RWPE1 (cell line): ENCODE measurements at regions of chr20 and their contacts with region 1.

Region 1: GRCh38 chr20:41978875-41979274 is 360.7 kb upstream of the CHD6 start:
- DNase-seq: no peak
- H3K27ac ChIP-seq: no peak overlapping the region
- CTCF ChIP-seq: no peak

Region 2: DNA sequence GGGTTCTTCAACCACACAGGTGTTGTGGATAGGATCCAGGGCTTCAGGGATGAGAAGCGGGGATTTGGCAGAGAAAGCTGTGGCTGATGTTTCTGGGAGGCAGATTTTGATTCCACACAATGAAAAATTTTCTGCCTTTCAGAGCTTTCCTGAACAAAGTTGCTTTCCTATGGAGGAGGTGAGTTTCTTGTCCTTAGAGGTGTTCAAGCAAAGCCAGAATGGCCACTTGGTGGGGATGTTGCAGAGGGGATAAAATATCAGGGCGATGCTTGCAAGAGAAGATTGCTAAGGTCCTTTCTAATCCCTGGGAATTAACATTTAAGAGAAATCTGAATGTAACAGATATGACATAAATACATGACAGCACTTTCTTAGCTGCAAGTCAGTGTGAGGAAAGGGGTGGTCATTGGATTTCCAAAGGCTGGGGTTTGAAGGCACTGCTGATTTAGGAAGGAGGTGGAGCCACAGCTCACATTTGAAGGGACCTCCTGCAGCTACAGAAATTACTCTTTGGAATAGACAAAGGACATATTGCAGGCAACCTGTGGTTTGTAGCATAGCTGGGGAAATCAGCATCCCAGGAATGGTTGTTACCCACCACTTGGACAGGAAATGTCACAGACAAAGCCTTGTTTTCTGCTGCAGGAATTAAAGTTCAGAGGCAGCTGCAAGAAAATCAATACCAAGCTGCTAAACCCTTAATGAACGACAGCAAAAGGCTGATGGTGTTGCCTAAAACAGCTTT is 89.6 kb before region 1 on chr20:
- CTCF ChIA-PET with region 1: no interaction called
- POLR2A ChIA-PET with region 1: no interaction called
- DNase-seq: peak; percentile 31
- H3K27ac ChIP-seq: no peak overlapping the region
- CTCF ChIP-seq: no peak

Region 3: DNA sequence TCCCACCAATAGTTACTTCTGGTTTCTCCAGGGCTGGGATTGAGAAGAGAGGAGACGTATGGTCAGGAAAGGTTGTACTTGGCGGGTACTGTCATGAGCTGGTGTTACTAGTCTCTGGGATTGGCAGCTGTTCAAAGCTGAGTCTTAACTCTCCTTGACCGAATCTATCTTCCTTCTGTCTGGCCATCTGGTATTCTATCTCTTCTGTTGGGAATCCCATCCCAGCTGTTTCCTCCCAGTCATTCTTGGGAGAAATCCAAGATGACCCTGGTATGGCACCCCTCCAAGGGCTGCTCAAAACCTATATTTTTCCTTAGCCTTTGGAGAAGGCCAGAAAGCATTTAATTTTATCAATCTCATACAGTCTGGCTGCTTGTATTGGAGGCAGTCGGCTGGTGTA is 73.7 kb before region 1 on chr20:
- CTCF ChIA-PET with region 1: no interaction called
- POLR2A ChIA-PET with region 1: interaction called, 10 read pairs
- DNase-seq: no peak
- H3K27ac ChIP-seq: no peak overlapping the region
- CTCF ChIP-seq: no peak

Region 4: DNA sequence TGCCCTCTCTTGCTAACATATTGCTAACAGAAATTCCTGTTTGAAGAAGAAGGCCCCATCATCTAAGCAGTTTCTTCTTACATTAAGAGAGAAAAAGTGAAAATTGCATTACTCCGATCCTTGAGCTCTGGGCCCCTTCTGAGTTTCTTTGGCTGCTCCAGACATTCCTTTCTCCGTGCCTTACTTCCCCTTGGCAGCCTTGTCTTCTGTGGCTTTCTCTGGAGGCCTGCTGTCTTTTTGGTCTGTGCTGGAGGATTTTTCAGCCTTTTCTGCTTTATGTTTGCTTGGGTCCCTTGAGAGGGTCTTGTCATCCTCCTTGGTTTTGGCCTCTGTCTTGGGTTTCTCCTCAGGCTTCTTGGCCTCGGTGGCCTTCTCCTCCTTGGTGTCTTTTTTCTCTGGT is 18.1 kb after region 1 on chr20:
- CTCF ChIA-PET with region 1: no interaction called
- POLR2A ChIA-PET with region 1: no interaction called
- DNase-seq: no peak
- H3K27ac ChIP-seq: no peak overlapping the region
- CTCF ChIP-seq: no peak